Endothelial cell of umbilical vein (primary cell): ENCODE measurements at regions of chr1 and their contacts with region 1.

Region 1: GRCh38 chr1:61077676-61078541 is 4.5 kb upstream of the NFIA start:
- DNase-seq: peak; percentile 100
- H3K4me3 ChIP-seq: peak overlapping the region; percentile 44 to 97 (median 77)
- H3K27ac ChIP-seq: peak overlapping the region; percentile 45
- H3K4me1 ChIP-seq: peaks cover 41% of the 10 kb centered on the region
- H3K27me3 ChIP-seq: no peaks in the 10 kb centered on the region
- CTCF ChIP-seq: no peak
- POLR2A ChIP-seq: peak; percentile 10

Region 2: GRCh38 chr1:60848583-60849188 is 229.2 kb before region 1 on chr1:
- CTCF ChIA-PET with region 1: no interaction called
- POLR2A ChIA-PET with region 1: no interaction called
- dilution Hi-C with region 1: no loop called
- intact Hi-C with region 1: loop called (anchors 1 kb)
- DNase-seq: peak; percentile 79
- H3K4me3 ChIP-seq: no peak overlapping the region
- H3K27ac ChIP-seq: no peak overlapping the region
- H3K4me1 ChIP-seq: no peaks in the 10 kb centered on the region
- H3K27me3 ChIP-seq: no peaks in the 10 kb centered on the region
- CTCF ChIP-seq: peak; percentile 35 to 45
- POLR2A ChIP-seq: no peak

Region 3: DNA sequence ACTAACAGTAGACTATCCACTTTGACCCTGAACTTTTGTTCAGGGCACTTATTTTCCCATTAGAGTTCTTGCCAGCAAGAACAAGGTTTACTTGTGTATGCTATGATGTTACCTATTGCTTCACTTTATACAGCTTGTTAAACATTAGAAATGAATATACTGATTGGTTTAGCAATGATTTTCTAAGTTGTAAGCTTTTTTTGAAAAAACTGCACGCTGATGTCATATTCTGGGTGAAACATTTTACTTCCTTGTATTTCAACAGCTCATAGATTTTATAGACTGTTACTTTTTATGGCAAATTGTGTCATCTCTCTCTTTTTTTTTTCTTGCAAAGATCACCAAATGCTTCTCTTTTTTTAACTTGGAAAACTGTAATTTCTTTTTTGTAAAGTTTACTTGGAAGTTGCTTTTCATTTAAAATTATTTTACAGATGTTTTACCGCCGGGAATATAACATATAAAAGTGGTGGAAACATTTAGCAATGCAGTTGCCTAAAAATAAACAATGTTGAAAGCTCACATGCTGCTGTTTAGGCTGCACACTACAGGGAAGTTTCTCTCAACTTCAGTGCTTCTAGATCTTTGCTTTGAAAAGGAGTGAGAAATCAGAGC is 210.9 kb before region 1 on chr1:
- CTCF ChIA-PET with region 1: no interaction called
- POLR2A ChIA-PET with region 1: no interaction called
- dilution Hi-C with region 1: no loop called
- intact Hi-C with region 1: no loop called
- DNase-seq: peak; percentile 17
- H3K4me3 ChIP-seq: no peak overlapping the region
- H3K27ac ChIP-seq: no peak overlapping the region
- H3K4me1 ChIP-seq: peaks cover 12% of the 10 kb centered on the region
- H3K27me3 ChIP-seq: no peaks in the 10 kb centered on the region
- CTCF ChIP-seq: no peak
- POLR2A ChIP-seq: no peak

Region 4: GRCh38 chr1:61011561-61012263 is 66.2 kb before region 1 on chr1:
- CTCF ChIA-PET with region 1: no interaction called
- POLR2A ChIA-PET with region 1: no interaction called
- dilution Hi-C with region 1: no loop called
- intact Hi-C with region 1: no loop called
- DNase-seq: peak; percentile 10
- H3K4me3 ChIP-seq: no peak overlapping the region
- H3K27ac ChIP-seq: no peak overlapping the region
- H3K4me1 ChIP-seq: no peaks in the 10 kb centered on the region
- H3K27me3 ChIP-seq: peaks cover 3 to 4% of the 10 kb centered on the region in 2 experiments
- CTCF ChIP-seq: no peak
- POLR2A ChIP-seq: no peak

Region 5: DNA sequence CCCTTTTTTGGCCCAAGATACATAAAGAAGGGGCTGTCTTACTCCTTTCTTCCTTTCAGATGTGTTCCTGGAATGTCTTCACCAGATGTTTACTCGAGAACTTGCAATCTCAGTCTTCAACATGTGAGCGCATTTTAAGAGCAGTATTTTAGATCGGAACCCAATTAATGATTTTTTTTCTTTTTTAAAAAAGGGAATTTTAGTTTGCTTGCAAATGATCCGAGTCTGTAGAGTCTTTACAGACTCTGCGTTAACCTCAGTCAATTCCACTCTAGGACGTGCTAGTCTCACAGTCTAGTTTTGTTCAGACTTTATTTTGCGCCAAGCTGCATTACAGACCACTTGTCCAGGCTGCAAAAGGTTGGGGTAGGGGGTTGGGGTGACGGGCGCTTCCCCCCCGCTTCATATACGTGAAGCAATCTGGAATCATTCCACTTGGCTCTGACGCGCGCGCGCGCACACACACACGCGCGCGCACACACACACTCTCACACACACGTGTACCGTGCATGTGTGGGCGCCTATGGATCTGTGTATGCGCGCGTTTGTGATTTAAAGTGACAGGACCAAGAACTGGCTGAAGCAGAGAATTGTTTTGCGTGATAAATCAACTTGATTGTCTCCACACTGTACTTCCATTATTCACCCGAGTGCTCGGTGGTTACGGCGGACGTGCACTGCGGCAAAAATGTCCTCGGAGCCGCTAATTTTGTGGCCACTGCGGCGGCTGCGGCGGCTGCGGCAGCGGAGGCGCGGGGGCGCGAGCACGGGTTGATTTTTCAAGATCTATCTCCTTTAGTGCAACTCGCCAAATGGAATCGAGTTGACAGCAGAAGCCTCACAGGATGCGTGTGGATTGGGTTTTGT is 21.1 kb before region 1 on chr1:
- CTCF ChIA-PET with region 1: interaction called, 78 read pairs
- POLR2A ChIA-PET with region 1: no interaction called
- dilution Hi-C with region 1: no loop called
- intact Hi-C with region 1: loop called (anchors 1 kb)
- DNase-seq: peak; percentile 74
- H3K4me3 ChIP-seq: peak overlapping the region; percentile 69 to 77 (median 75)
- H3K27ac ChIP-seq: peak overlapping the region; percentile 45
- H3K4me1 ChIP-seq: peaks cover 8% of the 10 kb centered on the region
- H3K27me3 ChIP-seq: no peaks in the 10 kb centered on the region
- CTCF ChIP-seq: no peak
- POLR2A ChIP-seq: no peak

Region 6: GRCh38 chr1:61109158-61109557 is 31.2 kb after region 1 on chr1:
- CTCF ChIA-PET with region 1: no interaction called
- POLR2A ChIA-PET with region 1: no interaction called
- dilution Hi-C with region 1: no loop called
- intact Hi-C with region 1: no loop called
- DNase-seq: no peak
- H3K4me3 ChIP-seq: no peak overlapping the region
- H3K27ac ChIP-seq: no peak overlapping the region
- H3K4me1 ChIP-seq: no peaks in the 10 kb centered on the region
- H3K27me3 ChIP-seq: no peaks in the 10 kb centered on the region
- CTCF ChIP-seq: no peak
- POLR2A ChIP-seq: no peak

Region 7: DNA sequence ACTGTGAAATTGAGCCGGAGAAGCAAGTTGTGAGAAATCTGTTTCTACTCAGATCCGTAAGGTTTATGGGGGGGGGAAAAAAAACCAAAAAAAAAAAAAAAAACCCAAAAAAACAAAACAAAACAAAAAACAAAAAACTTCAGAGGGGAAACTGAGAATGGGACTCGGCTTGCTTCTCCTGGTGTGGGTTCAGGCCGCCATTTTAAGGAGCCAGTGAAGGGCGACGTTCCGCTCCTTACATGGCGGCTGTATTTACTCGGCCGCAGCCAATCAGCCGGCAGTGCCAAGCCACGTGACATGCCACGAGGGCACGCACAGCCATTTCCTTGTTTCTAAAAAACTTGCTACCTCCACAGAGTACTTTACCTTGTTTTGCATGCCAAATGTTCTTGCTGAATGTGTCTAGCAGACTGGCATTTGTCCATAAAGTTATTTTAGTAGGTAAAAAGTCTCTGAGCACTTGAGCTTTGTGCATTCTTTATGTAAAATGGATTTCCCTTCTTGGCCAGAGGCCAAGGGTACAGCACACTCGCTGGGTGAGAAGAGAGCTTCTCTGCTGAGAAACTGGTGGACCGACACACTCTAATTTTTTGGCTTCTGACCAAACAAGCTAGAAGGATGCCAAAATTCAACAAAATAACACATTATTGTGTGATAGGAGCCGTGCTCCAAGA is 106.3 kb after region 1 on chr1:
- CTCF ChIA-PET with region 1: interaction called, 5 read pairs
- POLR2A ChIA-PET with region 1: no interaction called
- dilution Hi-C with region 1: no loop called
- intact Hi-C with region 1: loop called (anchors 1 kb)
- DNase-seq: peak; percentile 97
- H3K4me3 ChIP-seq: peak overlapping the region in 2 of 3 experiments; percentile 12 to 42
- H3K27ac ChIP-seq: peak overlapping the region; percentile 14
- H3K4me1 ChIP-seq: peaks cover 27% of the 10 kb centered on the region
- H3K27me3 ChIP-seq: no peaks in the 10 kb centered on the region
- CTCF ChIP-seq: no peak
- POLR2A ChIP-seq: peak; percentile 14

Region 8: GRCh38 chr1:61318319-61319125 is 240.6 kb after region 1 on chr1:
- CTCF ChIA-PET with region 1: no interaction called
- POLR2A ChIA-PET with region 1: no interaction called
- dilution Hi-C with region 1: no loop called
- intact Hi-C with region 1: loop called (anchors 5 kb)
- DNase-seq: peak; percentile 85
- H3K4me3 ChIP-seq: no peak overlapping the region
- H3K27ac ChIP-seq: peak overlapping the region; percentile 38
- H3K4me1 ChIP-seq: peaks cover 15% of the 10 kb centered on the region
- H3K27me3 ChIP-seq: no peaks in the 10 kb centered on the region
- CTCF ChIP-seq: no peak
- POLR2A ChIP-seq: no peak

Region 9: DNA sequence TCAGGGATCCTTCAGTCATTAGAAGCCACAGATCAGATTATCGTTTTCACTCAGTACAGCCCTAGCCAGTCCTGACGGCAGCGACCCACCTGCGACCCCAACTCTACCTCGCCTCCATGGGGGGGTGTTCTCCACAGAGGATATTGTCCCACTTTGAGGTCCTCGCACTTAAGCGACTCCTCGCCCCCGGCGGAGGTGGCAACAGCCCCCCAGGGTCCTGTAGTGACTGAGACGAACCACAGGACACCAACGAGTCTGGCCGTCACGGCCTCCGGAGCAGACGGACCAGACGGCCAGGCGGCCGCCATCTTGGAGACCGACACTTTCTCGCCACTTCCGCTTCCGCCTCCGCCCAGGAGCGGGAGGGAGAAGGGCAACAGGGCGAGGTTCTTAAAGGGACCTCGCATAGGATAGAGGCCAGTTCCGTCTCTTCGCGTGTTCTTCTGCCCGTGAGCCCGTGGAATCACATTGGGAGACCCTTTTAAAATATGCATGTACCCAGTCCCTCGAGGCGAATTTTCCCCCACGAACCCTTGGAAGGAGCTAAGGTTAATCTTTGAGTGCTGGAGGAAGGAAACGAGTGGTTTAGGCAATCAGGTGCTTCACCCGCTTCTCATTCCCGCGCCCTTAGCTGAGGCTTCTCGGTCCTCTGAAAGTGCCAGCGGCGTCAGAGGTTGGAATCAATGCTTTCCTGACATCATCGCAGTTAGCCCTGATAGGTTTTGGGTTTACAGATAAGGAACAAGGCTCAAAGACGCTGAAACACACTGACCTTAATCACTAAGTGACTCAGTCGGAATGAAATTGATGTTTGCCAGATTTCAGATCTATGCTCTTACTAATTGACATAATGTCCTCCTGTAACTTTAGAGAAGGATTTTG is 647.1 kb after region 1 on chr1 and contains the start of gene TM2D1:
- CTCF ChIA-PET with region 1: no interaction called
- POLR2A ChIA-PET with region 1: no interaction called
- dilution Hi-C with region 1: no loop called
- intact Hi-C with region 1: loop called (anchors 10 kb)
- DNase-seq: peak; percentile 88
- H3K4me3 ChIP-seq: peak within 1 kb of the TSS; percentile 81 to 97 (median 87)
- H3K27ac ChIP-seq: peak within 1 kb of the TSS; percentile 97
- H3K4me1 ChIP-seq: peaks cover 18% of the 10 kb centered on the region
- H3K27me3 ChIP-seq: no peaks in the 10 kb centered on the region
- CTCF ChIP-seq: no peak
- POLR2A ChIP-seq: peak; percentile 99
- total RNA-seq, gene TM2D1: 37.5 and 46.1 TPM in 2 replicates